ENCODE measurements at regions of chr11 and their contacts with region 1.

Region 1: DNA sequence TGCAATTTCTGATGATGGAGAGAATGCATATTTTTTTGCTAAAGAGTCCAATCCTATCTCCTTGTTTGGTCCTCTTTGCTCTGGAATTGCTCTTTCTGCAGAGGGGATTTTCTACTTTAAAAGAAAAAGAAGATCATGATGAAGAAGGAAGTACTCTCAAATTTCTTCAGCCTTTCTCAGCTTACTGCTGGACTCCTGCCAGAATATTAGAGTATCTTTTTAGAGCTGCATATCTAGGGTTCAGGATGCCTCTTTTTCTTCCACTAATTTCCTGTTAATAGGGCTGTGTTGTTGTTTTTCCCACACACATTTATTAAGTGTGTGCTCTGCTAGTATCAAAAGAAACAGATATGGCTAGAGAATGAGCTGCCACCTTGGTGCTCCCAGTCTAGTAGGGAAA is 18.2 kb downstream of the UBASH3B start:
- DNase-seq: peak in 1 of 9 donors; percentile 20
- ATAC-seq: no peak
- H3K4me3 ChIP-seq: no peak overlapping the region
- H3K4me3 Mint-ChIP-seq: peak overlapping the region in 7 of 10 donors; percentile 2 to 70 (median 37)
- H3K27ac ChIP-seq: peak overlapping the region; percentile 36
- H3K27ac Mint-ChIP-seq: peak overlapping the region in 8 of 9 donors; percentile 48 to 99 (median 88)
- H3K4me1 ChIP-seq: peaks cover 43 to 70% of the 10 kb centered on the region in 2 donors
- H3K4me1 Mint-ChIP-seq: peaks cover 32 to 98% (median 83%) of the 10 kb centered on the region in 7 donors
- H3K27me3 ChIP-seq: no peaks in the 10 kb centered on the region
- H3K27me3 Mint-ChIP-seq: peaks cover 0 to 3% (median 0%) of the 10 kb centered on the region in 5 donors

Region 2: GRCh38 chr11:122478986-122479385 is 194.7 kb before region 1 on chr11:
- CTCF ChIA-PET with region 1: no interaction called
- POLR2A ChIA-PET with region 1: no interaction called
- intact Hi-C with region 1: no loop called
- DNase-seq: no peak
- ATAC-seq: no peak
- H3K4me3 ChIP-seq: no peak overlapping the region
- H3K4me3 Mint-ChIP-seq: no peak overlapping the region
- H3K27ac ChIP-seq: no peak overlapping the region
- H3K27ac Mint-ChIP-seq: no peak overlapping the region
- H3K4me1 ChIP-seq: no peaks in the 10 kb centered on the region
- H3K4me1 Mint-ChIP-seq: no peaks in the 10 kb centered on the region
- H3K27me3 ChIP-seq: no peaks in the 10 kb centered on the region
- H3K27me3 Mint-ChIP-seq: peaks cover 2 to 33% (median 23%) of the 10 kb centered on the region in 5 donors

Region 3: DNA sequence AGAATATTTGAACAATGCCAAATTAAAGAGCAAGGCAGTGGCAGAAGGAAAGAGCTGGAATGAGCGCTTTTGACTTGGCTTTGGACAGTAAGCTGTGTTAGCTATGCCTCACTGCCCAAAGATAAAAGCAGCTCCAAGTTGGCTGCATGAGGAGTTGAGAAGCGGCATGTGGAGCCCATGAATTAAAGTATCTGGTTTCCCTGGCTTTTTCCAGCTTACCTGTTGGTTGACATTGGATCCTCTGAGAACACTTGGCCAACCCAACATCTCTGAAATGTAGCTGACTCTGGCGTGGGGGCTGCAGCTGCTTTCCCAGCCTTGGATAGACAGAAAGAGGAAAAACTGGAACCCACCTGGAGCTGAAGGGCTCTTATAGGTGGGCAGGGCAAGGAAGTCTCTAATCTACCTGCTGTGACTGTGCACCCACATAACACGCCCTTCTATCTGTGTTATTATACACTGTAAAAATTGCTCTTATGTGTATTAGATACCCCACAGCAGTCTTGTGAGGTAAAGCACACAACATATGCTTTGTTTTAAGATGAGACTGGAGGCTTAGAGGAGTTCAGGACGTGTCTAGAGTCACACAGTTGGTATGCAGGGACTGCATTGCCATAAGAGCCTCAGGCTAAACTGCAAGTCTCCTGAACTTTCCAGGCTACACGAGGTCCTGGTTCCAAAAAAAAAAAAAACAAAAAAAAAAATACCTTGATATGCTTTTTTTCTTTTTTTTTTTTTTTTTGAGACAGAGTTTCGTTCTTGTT is 12.3 kb before region 1 on chr11:
- CTCF ChIA-PET with region 1: interaction called, 17 read pairs
- POLR2A ChIA-PET with region 1: interaction called, 46 read pairs
- intact Hi-C with region 1: loop called (anchors 1 to 2 kb)
- DNase-seq: no peak
- ATAC-seq: no peak
- H3K4me3 ChIP-seq: no peak overlapping the region
- H3K4me3 Mint-ChIP-seq: peak overlapping the region in 1 of 10 donors; percentile 35
- H3K27ac ChIP-seq: no peak overlapping the region
- H3K27ac Mint-ChIP-seq: peak overlapping the region in 7 of 9 donors; percentile 21 to 94 (median 77)
- H3K4me1 ChIP-seq: peaks cover 14 to 48% of the 10 kb centered on the region in 2 donors
- H3K4me1 Mint-ChIP-seq: peaks cover 12 to 93% (median 76%) of the 10 kb centered on the region in 7 donors
- H3K27me3 ChIP-seq: no peaks in the 10 kb centered on the region
- H3K27me3 Mint-ChIP-seq: peaks cover 0 to 22% (median 0%) of the 10 kb centered on the region in 5 donors

Region 4: GRCh38 chr11:122721964-122722266 is 48.2 kb after region 1 on chr11:
- CTCF ChIA-PET with region 1: interaction called, 3 read pairs
- POLR2A ChIA-PET with region 1: interaction called, 7 read pairs
- intact Hi-C with region 1: loop called in 1 of 2 experiments (anchors 2 kb)
- DNase-seq: peak in 6 of 9 donors; percentile 10 to 42 (median 29)
- ATAC-seq: peak; percentile 44
- H3K4me3 ChIP-seq: no peak overlapping the region
- H3K4me3 Mint-ChIP-seq: peak overlapping the region in 8 of 10 donors; percentile 7 to 77 (median 44)
- H3K27ac ChIP-seq: peak overlapping the region; percentile 1
- H3K27ac Mint-ChIP-seq: peak overlapping the region in 8 of 9 donors; percentile 47 to 95 (median 81)
- H3K4me1 ChIP-seq: peaks cover 28 to 57% of the 10 kb centered on the region in 2 donors
- H3K4me1 Mint-ChIP-seq: peaks cover 51 to 86% (median 79%) of the 10 kb centered on the region in 7 donors
- H3K27me3 ChIP-seq: no peaks in the 10 kb centered on the region
- H3K27me3 Mint-ChIP-seq: peaks cover 0 to 16% (median 0%) of the 10 kb centered on the region in 5 donors

Measured in naive thymus-derived CD4-positive, alpha-beta T cell (primary cell).